GM13977 (cell line): ENCODE measurements at regions of chr19 and their contacts with region 1.

Region 1: DNA sequence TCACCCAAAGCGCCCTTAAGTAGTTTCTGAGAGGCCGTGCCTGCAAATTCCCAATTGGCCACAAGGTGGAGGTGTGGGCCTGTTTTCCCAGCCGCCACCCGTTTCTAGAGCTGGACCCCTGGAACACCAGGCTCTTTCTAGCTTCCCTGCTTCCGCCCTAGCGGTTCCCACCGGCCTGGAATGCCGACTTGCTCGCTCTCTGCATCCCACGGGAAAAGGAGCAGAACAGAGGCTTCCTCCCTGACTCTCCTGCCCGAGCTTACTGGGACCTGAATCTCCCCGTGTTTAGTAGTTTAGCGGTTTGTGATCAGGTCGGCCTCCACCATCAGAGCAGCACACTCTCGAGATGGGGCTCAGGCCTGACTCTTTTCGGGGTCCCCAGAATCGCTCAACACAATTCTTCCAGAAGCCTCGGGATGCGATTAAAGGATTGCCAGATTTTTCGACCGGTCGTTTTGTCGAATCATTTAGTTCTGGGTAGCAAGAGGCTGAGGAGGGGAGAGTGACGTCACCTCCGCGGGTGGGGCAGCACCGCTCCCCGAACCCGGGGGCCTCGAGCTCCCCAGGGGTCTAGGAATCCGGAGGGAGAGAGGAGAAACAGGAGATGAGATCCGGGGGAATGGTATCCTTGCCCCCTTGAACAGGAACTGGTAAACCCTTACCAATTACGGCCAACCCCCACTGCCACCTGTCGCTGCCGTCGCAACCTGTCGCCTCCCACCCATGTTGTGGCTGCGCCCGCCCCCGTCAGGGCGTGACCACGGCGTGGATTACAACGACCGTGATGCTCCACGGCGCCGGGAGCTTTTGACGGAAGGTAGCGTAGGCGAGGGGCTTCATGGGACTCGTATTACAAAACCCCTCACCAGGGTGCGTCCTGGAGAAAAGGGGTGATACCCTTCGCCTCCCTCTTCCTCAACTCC is 8.0 kb downstream of the NAPSA start:
- DNase-seq: peak; percentile 62
- CTCF ChIP-seq: peak; percentile 81

Region 2: DNA sequence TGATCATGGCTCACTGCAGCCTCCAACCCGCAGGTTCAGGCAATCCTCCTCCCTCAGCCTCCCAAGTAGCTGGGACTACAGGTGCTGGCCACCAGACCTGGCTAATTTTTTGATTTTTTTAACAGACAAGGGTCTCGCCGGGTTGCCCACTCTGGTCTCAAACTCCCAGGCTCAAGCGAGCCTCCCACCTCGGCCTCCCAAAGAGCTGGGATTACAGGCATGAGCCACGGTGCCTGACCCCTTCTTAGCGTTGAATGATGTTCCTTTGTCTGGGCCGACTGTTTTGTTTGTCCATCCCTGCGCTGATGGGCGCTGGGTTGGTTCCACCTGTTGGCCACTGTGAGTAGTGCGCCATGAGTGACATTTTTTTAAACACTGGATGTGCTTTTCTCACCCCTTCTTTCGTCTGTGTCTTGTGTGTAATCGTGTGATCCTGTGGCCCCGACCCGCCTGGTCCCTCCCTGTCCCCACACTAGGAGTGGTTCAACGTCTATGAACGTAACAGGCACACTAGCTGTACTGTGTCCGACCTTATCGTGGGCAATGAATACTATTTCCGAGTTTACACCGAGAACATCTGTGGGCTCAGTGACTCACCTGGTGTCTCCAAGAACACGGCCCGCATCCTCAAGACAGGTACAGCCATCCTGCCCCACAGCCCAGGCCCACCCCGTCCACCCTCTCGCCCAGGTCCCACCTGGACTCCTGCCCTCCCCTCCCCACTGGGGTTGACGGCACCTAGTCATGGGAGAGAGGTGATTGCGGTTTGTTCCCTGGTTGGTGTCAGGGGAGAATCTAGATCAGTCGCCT is 103.8 kb after region 1 on chr19:
- in situ Hi-C with region 1: loop called (anchors 5 kb)
- DNase-seq: peak; percentile 94
- CTCF ChIP-seq: peak; percentile 92